H1 (cell line): ENCODE measurements at regions of chr2 and their contacts with region 1.

Region 1: DNA sequence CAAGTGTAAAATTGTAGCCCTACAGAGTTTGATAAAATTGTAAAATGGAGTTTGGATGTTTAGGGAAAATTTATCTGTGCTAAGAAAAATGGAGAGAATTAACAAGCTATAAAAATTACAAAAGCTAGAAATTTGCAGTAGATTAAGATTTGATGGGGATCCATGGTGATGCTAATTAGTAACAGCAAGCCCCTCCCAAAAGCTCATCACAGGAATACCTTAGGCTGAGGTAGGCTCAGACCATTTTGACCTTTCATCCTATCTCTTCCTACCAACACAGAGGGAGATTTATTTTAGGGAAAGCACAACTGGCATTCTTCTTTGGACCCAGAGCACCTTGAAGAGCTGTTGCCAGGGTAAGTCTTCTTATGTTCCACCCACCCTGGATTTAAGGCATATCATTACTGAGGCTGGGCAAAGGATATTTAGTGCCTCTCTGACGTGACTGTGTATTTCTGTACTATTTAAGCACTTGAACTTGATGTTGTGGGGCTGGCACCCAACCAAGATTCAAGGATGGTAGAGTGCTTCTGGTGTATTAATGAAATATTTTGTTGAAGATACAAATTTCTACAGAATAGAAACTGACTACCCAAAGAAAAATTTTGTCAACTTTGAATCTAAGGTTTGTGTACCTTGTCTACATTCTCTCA is 70.8 kb upstream of the SLC39A10 start:
- DNase-seq: peak in 1 of 2 experiments; percentile 9
- H3K4me3 ChIP-seq: peak overlapping the region; percentile 21 to 56 (median 42); a peak in 7 of 8 replicates
- H3K27ac ChIP-seq: peak overlapping the region; percentile 42; the same call in 1 of the 2 replicates
- H3K4me1 ChIP-seq: peaks cover 0 to 4% (median 2%) of the 10 kb centered on the region in 4 experiments; a peak in 3 of 7 replicates
- H3K27me3 ChIP-seq: no peaks in the 10 kb centered on the region
- CTCF ChIP-seq: no peak
- EP300 ChIP-seq: 0 out of 3 replicates have a peak, but pooled peaks of 1 of the 2 experiments have one; percentile 26
- POLR2A ChIP-seq: peak in 1 of 2 experiments; percentile 31; a peak in 1 of 3 replicates
- RAD21 ChIP-seq: no peak

Region 2: DNA sequence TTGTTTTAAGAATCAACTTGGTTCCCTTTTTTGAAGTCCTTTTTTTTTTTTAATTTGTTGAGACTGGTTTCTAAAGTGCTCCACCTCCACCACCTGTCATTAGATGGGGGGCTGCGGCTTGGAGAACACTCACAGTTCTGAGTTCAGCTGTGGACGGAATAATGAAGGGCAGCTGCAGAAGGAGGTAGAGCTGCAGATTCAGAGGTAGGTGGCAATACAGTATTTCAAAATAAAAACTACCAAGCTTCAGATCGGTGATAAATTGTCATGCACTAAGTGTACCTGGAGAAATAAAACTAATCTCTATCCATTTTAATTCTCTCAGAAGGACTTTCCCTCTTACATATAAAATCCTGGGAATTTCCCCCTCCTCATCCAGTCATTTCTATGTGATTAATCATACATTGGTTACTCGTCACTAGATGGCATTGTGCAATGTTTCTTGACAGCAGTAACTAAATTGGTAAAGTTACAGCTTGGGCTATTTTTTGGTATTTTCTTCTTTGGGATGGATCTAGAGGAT is 10.2 kb before region 1 on chr2:
- CTCF ChIA-PET with region 1: interaction called, 21 read pairs
- POLR2A ChIA-PET with region 1: interaction called, 3 read pairs
- DNase-seq: no peak
- H3K4me3 ChIP-seq: no peak overlapping the region
- H3K27ac ChIP-seq: no peak overlapping the region
- H3K4me1 ChIP-seq: no peaks in the 10 kb centered on the region
- H3K27me3 ChIP-seq: no peaks in the 10 kb centered on the region
- CTCF ChIP-seq: peak in 1 of 3 experiments; percentile 12; a peak in 1 of 4 replicates
- EP300 ChIP-seq: no peak
- POLR2A ChIP-seq: no peak
- RAD21 ChIP-seq: peak; percentile 43 to 54

Region 3: GRCh38 chr2:195626507-195626906 is 40.3 kb after region 1 on chr2:
- CTCF ChIA-PET with region 1: no interaction called
- POLR2A ChIA-PET with region 1: no interaction called
- DNase-seq: no peak
- H3K4me3 ChIP-seq: no peak overlapping the region
- H3K27ac ChIP-seq: no peak overlapping the region
- H3K4me1 ChIP-seq: no peaks in the 10 kb centered on the region
- H3K27me3 ChIP-seq: no peaks in the 10 kb centered on the region
- CTCF ChIP-seq: no peak
- EP300 ChIP-seq: no peak
- POLR2A ChIP-seq: no peak
- RAD21 ChIP-seq: no peak